ENCODE measurements at regions of chr20 and their contacts with region 1.

Region 1: DNA sequence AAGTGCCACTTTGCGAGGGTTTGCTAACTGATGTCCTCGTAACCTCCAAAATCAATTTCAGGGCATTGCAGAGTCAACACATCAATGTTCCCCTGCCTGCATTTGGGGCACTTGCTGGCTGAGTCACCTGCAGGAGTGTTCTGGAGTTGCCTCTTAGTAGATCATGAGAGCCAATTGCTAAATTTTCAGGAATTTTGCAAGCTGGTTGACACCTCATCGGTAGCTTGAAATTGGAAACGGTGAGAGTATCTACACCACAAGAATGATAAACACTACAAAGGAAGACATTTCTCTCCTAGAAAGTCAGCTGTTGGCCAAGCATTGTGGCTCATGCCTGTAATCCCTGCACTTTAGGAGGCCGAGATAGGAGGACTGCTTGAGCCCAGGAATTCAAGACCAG is 10.8 kb upstream of the BFSP1 start:
- DNase-seq: peak in 1 of 2 experiments; percentile 95
- H3K4me3 ChIP-seq: no peak overlapping the region
- H3K27ac ChIP-seq: peak overlapping the region; percentile 57
- H3K4me1 ChIP-seq: peaks cover 46% of the 10 kb centered on the region
- H3K27me3 ChIP-seq: no peaks in the 10 kb centered on the region
- CTCF ChIP-seq: no peak

Region 2: DNA sequence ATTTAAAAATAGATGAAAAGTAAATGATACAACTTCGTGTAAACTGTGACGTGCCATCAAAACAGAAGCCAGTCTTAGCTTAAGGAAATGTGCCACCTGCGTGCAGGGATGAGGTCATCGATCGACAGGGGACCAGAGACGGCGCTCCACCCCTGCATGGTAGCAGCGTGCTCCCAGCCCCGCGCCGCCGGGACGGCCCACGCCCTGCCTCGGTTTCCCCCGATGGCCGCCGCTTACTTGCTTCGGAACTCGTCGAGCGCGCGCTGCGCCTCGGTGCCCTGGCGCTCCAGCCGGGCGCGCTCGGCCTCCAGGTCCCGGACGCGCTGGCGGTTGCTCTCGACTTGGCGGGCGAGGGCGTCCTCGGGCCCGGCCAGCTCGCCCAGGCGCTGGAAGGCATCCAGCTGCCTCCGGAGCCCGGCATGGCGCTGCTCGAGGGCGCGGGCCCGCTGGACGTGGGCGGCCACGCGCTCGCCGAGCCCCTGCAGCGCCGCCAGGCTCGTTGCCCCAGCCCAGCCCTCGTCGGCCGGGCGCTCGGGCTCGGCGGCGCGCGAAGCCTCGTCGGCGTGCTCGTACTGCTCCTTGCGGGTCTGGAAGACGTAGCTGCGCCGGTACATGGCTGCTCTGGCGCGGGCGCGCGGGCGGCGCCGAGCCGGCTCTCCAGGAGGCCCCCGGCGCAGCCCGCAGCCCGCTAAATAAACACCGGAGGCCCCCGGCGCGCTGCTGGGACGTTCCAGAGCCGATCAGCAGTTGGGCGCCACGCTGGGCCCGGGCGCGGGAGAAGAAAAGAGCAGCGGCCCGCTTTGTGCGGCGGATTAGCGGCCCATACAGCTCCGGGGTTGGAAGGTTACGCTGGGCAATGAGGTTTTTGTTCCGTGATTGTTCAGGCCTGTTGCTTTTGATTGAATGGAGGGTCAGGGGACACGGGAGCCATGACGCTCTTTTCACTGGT is 11.0 kb before region 1 on chr20 and contains the start of gene BFSP1:
- CTCF ChIA-PET with region 1: no interaction called
- POLR2A ChIA-PET with region 1: interaction called, 16 read pairs
- intact Hi-C with region 1: no loop called
- DNase-seq: peak; percentile 39 to 70
- H3K4me3 ChIP-seq: peak within 1 kb of the TSS; percentile 66
- H3K27ac ChIP-seq: no peak within 1 kb of the TSS
- H3K4me1 ChIP-seq: peaks cover 16% of the 10 kb centered on the region
- H3K27me3 ChIP-seq: no peaks in the 10 kb centered on the region
- CTCF ChIP-seq: no peak
- total RNA-seq, gene BFSP1: 10.4 and 13.8 TPM in 2 replicates

Region 3: GRCh38 chr20:17761604-17762003 is 219.6 kb after region 1 on chr20:
- CTCF ChIA-PET with region 1: no interaction called
- POLR2A ChIA-PET with region 1: no interaction called
- intact Hi-C with region 1: no loop called
- DNase-seq: no peak
- H3K4me3 ChIP-seq: no peak overlapping the region
- H3K27ac ChIP-seq: no peak overlapping the region
- H3K4me1 ChIP-seq: peaks cover 11% of the 10 kb centered on the region
- H3K27me3 ChIP-seq: peaks cover 3% of the 10 kb centered on the region; the same call in 1 of the 2 replicates
- CTCF ChIP-seq: no peak

Measured in PC-9 (cell line).